CD4-positive, alpha-beta T cell (primary cell): ENCODE measurements at regions of chr20 and their contacts with region 1.

Region 1: GRCh38 chr20:53611449-53611894 is 17.8 kb upstream of the ZNF217 start:
- DNase-seq: peak in 2 of 14 experiments; percentile 47 to 48
- ATAC-seq: no peak
- H3K4me3 ChIP-seq: no peak overlapping the region
- H3K4me3 Mint-ChIP-seq: no peak overlapping the region
- H3K27ac ChIP-seq: peak overlapping the region in 1 of 2 donors; percentile 9
- H3K27ac Mint-ChIP-seq: peak overlapping the region; percentile 77
- H3K4me1 ChIP-seq: peaks cover 26% of the 10 kb centered on the region
- H3K4me1 Mint-ChIP-seq: peaks cover 40% of the 10 kb centered on the region
- H3K27me3 ChIP-seq: no peaks in the 10 kb centered on the region
- H3K27me3 Mint-ChIP-seq: no peaks in the 10 kb centered on the region
- CTCF ChIP-seq: no peak

Region 2: GRCh38 chr20:53539516-53539915 is 72.0 kb before region 1 on chr20:
- CTCF ChIA-PET with region 1: no interaction called
- POLR2A ChIA-PET with region 1: no interaction called
- intact Hi-C with region 1: no loop called
- DNase-seq: no peak
- ATAC-seq: no peak
- H3K4me3 ChIP-seq: no peak overlapping the region
- H3K4me3 Mint-ChIP-seq: no peak overlapping the region
- H3K27ac ChIP-seq: no peak overlapping the region
- H3K27ac Mint-ChIP-seq: no peak overlapping the region
- H3K4me1 ChIP-seq: no peaks in the 10 kb centered on the region
- H3K4me1 Mint-ChIP-seq: no peaks in the 10 kb centered on the region
- H3K27me3 ChIP-seq: no peaks in the 10 kb centered on the region
- H3K27me3 Mint-ChIP-seq: no peaks in the 10 kb centered on the region
- CTCF ChIP-seq: no peak

Region 3: DNA sequence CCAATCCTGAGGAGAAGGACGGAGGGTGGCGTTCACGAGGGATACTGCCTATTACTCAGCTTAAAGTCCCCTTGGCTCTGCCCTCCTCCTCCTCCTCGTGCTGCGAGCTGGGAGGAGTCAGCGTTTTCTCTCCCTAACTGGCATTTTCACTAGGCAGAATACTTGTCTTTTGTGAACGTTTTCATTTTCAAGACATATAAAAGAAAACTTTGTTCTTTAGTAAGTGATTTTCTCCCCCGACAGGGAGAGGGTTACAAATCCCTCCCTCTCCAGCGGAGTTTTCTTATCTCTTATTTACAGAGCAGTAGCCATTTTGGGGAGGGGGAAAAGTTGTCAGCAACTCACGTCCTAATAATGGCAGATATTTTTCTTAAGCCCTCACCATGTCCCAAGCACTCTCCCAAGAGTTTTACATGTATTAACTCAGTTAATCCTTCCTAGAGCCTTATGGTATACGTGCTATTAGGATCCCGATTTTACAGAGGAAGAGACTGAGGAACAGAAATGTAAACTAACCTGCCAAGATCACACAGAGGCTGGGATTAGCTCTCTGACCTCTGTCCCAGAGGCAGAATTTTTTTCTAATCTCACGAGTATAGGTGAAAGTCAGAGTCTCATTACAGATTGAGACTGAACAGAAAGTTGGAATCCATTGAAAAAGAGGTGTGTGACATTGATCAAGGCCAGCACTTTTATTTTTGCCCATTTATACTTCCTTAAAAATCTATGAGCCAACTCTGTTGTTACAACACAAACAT is 12.2 kb after region 1 on chr20:
- CTCF ChIA-PET with region 1: interaction called, 13 read pairs
- POLR2A ChIA-PET with region 1: interaction called, 88 read pairs
- intact Hi-C with region 1: loop called in 1 of 2 experiments (anchors 2 kb)
- DNase-seq: peak in 9 of 14 experiments; percentile 20 to 75 (median 41)
- ATAC-seq: peak; percentile 78
- H3K4me3 ChIP-seq: peak overlapping the region; percentile 57
- H3K4me3 Mint-ChIP-seq: peak overlapping the region; percentile 82
- H3K27ac ChIP-seq: peak overlapping the region; percentile 58 to 81
- H3K27ac Mint-ChIP-seq: peak overlapping the region; percentile 92
- H3K4me1 ChIP-seq: peaks cover 34% of the 10 kb centered on the region
- H3K4me1 Mint-ChIP-seq: peaks cover 37% of the 10 kb centered on the region
- H3K27me3 ChIP-seq: no peaks in the 10 kb centered on the region
- H3K27me3 Mint-ChIP-seq: no peaks in the 10 kb centered on the region
- CTCF ChIP-seq: no peak

Region 4: DNA sequence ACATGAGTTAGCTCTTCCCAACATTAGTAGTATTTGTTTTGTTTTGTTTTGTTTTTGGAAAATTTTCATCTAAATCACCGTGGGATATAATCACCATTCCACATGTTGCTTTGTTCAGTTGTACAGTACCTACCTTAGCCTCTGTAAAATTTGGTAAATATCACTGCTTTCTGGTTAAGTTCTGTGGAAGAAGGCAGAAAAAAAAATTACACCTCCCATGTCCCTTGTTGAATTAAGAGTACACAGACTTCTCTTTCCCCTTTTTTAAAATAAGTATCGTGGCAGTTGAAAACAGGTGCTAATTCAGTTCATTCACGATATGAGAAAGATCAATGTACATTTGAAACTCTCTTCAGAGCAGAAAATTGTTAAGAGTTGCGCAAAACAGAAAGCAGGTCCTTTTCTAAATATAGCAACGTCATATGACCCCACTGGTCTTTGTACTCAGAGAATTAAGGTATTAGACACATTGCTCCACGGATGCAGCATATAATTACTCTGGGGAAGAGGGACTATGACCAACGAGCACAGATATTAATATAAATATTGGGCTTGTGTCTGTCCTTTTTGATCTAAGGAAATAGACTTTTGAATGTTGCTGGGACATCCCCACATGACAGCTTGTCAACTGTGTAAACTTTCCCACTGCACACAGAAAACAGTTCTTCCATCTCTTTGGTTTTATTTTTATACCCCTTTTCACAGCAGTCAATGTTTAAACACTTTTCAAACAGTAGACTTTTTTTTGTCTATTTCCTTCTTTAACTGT is 40.8 kb after region 1 on chr20:
- CTCF ChIA-PET with region 1: interaction called, 3 read pairs
- POLR2A ChIA-PET with region 1: interaction called, 18 read pairs
- intact Hi-C with region 1: no loop called
- DNase-seq: peak in 3 of 14 experiments; percentile 59 to 70 (median 69)
- ATAC-seq: peak; percentile 73
- H3K4me3 ChIP-seq: peak overlapping the region; percentile 23
- H3K4me3 Mint-ChIP-seq: peak overlapping the region; percentile 65
- H3K27ac ChIP-seq: peak overlapping the region; percentile 48 to 68
- H3K27ac Mint-ChIP-seq: peak overlapping the region; percentile 92
- H3K4me1 ChIP-seq: peaks cover 15% of the 10 kb centered on the region
- H3K4me1 Mint-ChIP-seq: peaks cover 44% of the 10 kb centered on the region
- H3K27me3 ChIP-seq: no peaks in the 10 kb centered on the region
- H3K27me3 Mint-ChIP-seq: no peaks in the 10 kb centered on the region
- CTCF ChIP-seq: no peak

Region 5: DNA sequence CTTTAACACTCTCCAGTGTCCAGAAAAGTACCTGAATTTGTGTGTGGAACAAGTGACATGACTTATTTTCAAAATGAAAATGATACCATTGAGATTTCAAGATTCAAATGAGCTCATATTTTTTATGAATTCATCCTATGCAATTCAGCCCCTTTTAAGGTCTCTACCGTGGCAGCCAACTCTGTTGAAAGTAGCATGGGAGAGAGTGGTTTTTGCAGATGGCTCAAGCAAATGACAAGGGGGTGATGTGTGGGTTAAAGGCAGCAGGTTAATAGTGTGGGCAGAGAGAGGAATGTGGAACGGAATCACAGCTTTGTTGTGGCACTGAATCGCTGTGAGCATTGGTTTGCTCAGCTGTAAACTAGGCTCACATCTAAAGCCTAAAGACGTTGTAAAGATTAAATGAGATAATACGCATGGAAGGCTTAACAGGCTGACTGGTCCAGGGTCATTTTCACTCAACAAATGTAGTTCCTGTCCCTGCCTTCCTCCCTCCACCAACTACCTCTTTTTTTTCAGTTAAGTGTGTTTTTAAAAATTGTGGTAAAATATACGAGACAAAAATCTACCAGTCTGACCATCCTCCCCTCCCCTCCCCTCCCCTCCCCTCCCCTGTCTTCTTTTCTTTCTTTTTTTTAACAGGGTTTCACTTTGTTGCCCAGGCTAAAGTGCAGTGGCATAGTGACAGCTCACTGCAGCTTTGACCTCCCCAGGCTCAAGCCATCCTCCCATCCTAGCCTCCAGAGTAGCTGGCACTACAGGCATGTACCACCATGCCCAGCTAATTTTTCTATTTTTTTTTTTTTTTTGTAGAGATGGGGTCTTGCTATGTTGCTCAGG is 96.9 kb after region 1 on chr20:
- CTCF ChIA-PET with region 1: no interaction called
- POLR2A ChIA-PET with region 1: interaction called, 30 read pairs
- intact Hi-C with region 1: loop called in 1 of 2 experiments (anchors 5 kb)
- DNase-seq: peak in 6 of 14 experiments; percentile 2 to 51 (median 26)
- ATAC-seq: peak; percentile 38
- H3K4me3 ChIP-seq: no peak overlapping the region
- H3K4me3 Mint-ChIP-seq: peak overlapping the region; percentile 69
- H3K27ac ChIP-seq: peak overlapping the region; percentile 52 to 57
- H3K27ac Mint-ChIP-seq: peak overlapping the region; percentile 92
- H3K4me1 ChIP-seq: peaks cover 45% of the 10 kb centered on the region
- H3K4me1 Mint-ChIP-seq: peaks cover 47% of the 10 kb centered on the region
- H3K27me3 ChIP-seq: no peaks in the 10 kb centered on the region
- H3K27me3 Mint-ChIP-seq: no peaks in the 10 kb centered on the region
- CTCF ChIP-seq: no peak